ENCODE measurements at regions of chr12 and their contacts with region 1.

Region 1: DNA sequence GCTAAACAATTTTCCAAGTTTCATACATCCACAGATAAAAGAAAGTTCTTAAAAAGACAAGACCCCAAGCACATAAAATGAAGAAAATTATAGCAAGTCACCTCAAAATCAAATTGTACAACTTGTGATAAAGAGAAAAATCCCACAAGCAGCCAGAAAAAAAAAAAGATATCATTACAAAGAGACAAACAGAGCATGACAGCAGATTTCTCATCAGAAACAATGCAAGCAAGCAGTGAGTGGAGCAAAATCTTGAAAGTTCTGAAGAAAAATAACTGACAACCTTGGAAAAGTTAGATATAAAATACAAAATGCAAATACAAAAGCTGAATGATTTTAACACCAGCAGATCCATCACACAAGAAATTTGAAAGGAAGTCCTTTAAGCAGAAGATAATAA is 194.5 kb upstream of the SOX5 start:
- DNase-seq: no peak
- ATAC-seq: no peak
- H3K4me3 ChIP-seq: no peak overlapping the region
- H3K27ac ChIP-seq: no peak overlapping the region
- H3K4me1 ChIP-seq: no peaks in the 10 kb centered on the region
- H3K27me3 ChIP-seq: no peaks in the 10 kb centered on the region
- CTCF ChIP-seq: no peak

Region 2: DNA sequence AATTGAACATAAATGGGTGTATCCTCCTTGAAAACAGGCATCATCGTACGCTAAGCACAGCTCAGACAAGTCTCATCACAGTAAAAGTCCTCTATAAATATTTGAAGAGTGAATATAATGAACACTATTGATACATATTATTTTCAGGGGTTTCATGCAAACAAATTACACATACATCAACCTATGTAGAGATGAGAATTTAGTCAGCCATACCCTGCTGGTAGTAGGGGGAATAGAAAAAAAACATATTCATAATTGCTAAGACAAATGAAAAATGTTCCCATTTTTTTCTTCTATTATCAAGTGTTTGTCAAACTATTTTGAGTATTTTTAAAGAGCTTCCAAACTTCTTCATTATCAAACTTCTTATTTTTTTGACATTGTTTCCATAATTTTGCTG is 11.1 kb after region 1 on chr12:
- intact Hi-C with region 1: loop called in 1 of 10 experiments (anchors 1 kb)
- DNase-seq: no peak
- ATAC-seq: no peak
- H3K4me3 ChIP-seq: no peak overlapping the region
- H3K27ac ChIP-seq: no peak overlapping the region
- H3K4me1 ChIP-seq: no peaks in the 10 kb centered on the region
- H3K27me3 ChIP-seq: no peaks in the 10 kb centered on the region
- CTCF ChIP-seq: no peak

Region 3: DNA sequence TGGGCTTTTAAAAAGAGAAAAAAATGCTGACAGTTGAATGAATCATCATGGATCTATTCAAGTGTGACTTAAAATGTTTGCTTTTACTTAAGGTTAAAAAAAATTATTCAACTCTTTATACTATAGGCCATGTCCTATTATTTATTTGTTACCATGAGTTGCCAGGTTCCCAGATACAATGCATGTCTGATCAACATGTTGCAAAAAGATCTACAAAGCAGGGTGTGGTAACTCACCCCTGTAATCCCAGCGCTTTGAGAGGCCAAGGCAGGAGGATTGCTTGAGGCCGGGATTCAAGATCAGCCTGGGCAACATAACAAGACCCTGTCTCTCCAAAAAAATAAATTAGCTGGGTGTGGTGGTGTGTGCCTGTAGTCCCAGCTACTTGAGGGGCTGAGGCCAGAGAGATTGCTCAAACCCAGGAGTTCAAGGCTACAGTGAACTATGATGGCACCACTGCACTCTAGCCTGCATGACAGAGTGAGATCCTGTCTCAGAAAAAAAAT is 344.2 kb after region 1 on chr12:
- intact Hi-C with region 1: no loop called
- DNase-seq: no peak
- ATAC-seq: no peak
- H3K4me3 ChIP-seq: no peak overlapping the region
- H3K27ac ChIP-seq: no peak overlapping the region
- H3K4me1 ChIP-seq: peaks cover 0 to 9% (median 0%) of the 10 kb centered on the region in 9 donors
- H3K27me3 ChIP-seq: no peaks in the 10 kb centered on the region
- CTCF ChIP-seq: no peak

Measured in heart right ventricle (tissue), 16 donors.